ENCODE measurements at regions of chr12 and their contacts with region 1.

Region 1: DNA sequence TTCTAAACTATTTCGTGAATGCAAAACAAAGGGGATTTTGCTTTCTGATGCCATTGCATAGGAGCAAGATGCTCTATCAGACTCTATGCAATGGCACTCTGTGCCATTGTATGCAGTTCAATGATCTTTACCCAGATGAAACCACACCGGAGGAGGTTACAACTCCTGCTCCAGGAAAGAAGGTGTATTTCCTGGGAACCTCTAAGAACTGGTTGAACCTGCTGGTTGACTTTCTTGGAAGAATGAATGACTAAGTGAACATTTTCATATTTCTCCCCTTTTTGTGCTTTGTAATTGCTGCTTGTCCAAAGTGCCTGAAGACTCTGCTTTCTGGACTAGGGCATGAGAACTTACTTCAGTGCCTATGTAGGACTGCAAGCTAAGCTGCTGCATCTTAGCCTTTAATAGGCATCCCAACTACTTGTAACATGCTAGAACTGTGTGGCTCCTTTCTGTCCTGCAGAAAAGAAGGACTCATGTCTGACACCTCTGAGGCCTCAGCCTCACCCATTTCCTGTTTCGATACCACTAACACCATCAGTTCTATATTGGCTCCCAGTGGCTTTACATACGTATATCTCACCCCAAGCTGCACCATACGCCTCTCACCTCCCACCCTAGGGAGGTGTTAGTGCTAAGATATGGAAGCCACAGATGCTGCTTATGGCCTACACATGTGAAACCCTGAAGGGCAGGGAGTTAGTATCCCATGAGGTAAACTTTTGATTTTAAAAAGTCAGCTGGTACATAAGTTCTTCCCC is 193.5 kb upstream of the CNOT2 start:
- DNase-seq: no peak

Region 2: DNA sequence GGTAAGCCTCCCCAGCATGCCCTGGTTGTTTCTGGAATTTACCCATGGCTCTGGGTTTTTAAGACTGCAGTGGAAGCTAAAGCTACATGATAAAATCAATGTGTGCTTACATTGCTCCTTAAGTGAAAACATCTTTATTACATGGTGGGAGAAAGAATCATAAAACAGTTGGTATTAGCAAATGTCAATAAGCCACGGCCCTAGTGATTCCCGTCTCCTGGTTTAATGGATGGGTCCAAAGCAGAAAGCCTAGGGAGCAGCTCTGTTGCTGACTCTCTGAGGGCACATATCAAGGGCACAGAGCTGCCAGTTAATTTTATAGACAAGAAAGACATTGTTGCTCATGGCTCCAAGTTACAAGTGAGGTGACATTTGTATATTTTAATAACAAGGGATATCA is 96.9 kb before region 1 on chr12:
- intact Hi-C with region 1: no loop called
- DNase-seq: no peak

Region 3: DNA sequence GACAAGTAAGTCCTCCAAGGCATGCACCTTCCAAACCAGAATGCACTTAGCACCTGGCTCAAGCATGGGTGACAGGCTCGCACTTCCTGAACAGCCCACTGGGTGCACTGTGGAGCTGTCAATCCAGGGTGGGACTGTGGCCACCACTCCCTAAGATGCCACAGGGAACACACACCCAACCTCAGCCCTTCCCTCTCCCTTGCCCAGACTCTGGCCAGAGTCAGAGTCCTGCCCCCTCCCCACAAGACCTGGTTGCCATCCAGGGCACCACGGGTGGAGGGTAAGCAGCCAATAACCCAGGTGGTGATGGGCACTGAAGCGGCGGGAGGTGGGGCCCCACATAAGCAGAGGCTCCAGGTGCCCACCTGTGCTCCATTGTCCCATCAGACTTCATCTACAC is 64.1 kb before region 1 on chr12:
- intact Hi-C with region 1: loop called (anchors 10 kb)
- DNase-seq: no peak

Region 4: DNA sequence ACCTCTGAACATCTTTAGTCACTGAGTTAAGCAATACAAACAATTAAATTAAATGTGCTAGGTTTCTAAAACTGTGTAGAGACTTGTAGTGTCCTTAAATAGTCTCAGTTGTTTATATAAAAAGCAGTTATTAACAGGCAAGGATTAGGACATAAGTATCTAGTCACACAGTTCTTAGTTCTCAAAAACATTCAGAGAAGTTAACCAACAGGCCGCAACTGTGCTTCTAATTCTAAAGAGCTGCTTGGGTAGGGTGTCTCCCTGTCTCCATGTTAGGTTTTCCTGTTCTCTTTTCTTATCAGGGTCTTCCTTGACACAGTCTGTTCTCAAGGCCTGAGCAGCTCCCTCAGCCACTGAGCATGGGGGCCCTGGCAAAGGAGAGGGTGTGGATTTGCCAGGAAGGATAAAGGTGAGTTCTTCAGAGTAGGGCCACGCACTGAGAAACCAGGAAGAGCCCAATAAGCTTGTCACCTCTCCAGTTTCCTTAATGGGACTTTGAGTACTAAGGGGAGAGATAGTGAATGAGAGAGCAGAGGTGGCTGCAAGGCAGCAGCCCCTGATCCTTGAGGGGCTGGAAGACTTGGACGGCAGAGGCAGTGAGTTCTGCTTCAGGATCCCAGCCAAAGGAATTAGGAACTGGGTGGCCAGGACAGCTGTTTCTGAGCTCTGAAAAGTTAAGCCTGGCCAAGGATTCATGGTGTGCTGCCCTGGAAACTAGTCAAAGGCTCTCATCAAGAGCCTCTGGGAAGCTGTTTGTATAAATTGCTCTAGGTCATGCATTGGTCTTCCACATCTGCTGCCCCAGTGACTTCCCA is 47.5 kb before region 1 on chr12:
- intact Hi-C with region 1: loop called (anchors 10 kb)
- DNase-seq: no peak

Measured in cardiac septum (tissue), 1 donor.